Activated CD4-positive, alpha-beta T cell treated with anti-CD3 and anti-CD28 coated beads for 36 hours (primary cell): ENCODE measurements at regions of chr11 and their contacts with region 1.

Region 1: GRCh38 chr11:102451681-102452460 is 694 bp downstream of the TMEM123 start:
- DNase-seq: peak; percentile 90
- ATAC-seq: peak; percentile 66
- H3K4me3 Mint-ChIP-seq: peak overlapping the region; percentile 86
- H3K27ac Mint-ChIP-seq: peak overlapping the region; percentile 91
- H3K4me1 Mint-ChIP-seq: peaks cover 82% of the 10 kb centered on the region
- H3K27me3 Mint-ChIP-seq: no peaks in the 10 kb centered on the region

Region 2: GRCh38 chr11:102317099-102317767 is 134.6 kb before region 1 on chr11 and contains the start of gene BIRC3:
- CTCF ChIA-PET with region 1: interaction called, 3 read pairs
- POLR2A ChIA-PET with region 1: no interaction called
- intact Hi-C with region 1: loop called (anchors 1 to 2 kb)
- DNase-seq: peak; percentile 95
- ATAC-seq: peak; percentile 85
- H3K4me3 Mint-ChIP-seq: peak within 1 kb of the TSS; percentile 96
- H3K27ac Mint-ChIP-seq: peak within 1 kb of the TSS; percentile 99
- H3K4me1 Mint-ChIP-seq: peaks cover 68% of the 10 kb centered on the region
- H3K27me3 Mint-ChIP-seq: no peaks in the 10 kb centered on the region
- total RNA-seq, gene BIRC3: 99.2 to 109 TPM

Region 3: GRCh38 chr11:102330231-102330630 is 121.6 kb before region 1 on chr11:
- CTCF ChIA-PET with region 1: no interaction called
- POLR2A ChIA-PET with region 1: no interaction called
- intact Hi-C with region 1: no loop called
- DNase-seq: no peak
- ATAC-seq: no peak
- H3K4me3 Mint-ChIP-seq: no peak overlapping the region
- H3K27ac Mint-ChIP-seq: no peak overlapping the region
- H3K4me1 Mint-ChIP-seq: peaks cover 15% of the 10 kb centered on the region
- H3K27me3 Mint-ChIP-seq: no peaks in the 10 kb centered on the region

Region 4: DNA sequence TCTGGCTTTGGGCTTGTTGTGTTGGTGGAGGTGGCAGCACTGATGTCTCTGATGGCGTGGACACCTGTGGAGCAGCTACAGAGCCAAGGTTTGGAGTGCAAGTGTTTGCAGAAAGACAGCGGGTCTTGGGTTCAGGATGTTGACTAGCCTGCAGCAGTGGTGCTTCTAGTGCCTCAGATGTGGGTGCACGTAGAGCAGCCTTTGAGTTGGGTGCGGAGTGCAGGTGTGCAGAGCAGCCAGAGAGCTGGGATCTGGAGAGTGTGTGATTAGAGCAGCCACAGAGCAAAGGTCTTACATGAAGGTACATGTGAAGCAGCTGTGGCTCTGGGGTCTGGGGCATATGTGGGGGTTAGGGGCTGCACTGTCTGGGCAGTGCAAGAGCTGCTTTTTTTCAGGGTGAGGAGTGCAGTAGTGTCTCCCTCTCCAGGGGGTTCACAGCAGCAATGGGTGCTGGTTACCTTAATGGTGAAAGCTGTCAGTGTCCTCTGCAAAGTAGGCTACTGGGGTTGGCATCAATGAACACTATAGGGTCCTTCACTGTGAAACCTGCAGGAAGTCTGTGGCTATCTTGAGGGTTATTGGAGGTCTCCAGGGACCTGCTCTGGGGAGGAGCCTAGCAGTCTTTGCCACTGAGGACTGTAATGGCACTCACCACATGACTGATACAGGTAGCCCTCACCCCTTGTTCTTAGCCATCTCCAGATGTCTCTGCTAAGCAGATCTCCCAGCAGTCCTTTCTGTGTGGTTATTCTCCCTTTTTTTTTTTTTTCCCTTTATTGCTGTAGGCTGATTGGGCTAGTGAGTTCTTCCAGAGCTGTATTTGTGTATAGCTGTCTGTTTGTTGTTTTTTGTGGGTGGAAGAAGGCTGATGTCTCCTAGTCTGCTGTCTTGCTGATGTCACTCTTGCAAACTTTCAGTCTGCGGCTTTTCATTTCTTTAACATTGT is 90.5 kb before region 1 on chr11:
- CTCF ChIA-PET with region 1: no interaction called
- POLR2A ChIA-PET with region 1: no interaction called
- intact Hi-C with region 1: no loop called
- DNase-seq: peak; percentile 33
- ATAC-seq: peak; percentile 86
- H3K4me3 Mint-ChIP-seq: no peak overlapping the region
- H3K27ac Mint-ChIP-seq: peak overlapping the region; percentile 75
- H3K4me1 Mint-ChIP-seq: peaks cover 42% of the 10 kb centered on the region
- H3K27me3 Mint-ChIP-seq: no peaks in the 10 kb centered on the region

Region 5: DNA sequence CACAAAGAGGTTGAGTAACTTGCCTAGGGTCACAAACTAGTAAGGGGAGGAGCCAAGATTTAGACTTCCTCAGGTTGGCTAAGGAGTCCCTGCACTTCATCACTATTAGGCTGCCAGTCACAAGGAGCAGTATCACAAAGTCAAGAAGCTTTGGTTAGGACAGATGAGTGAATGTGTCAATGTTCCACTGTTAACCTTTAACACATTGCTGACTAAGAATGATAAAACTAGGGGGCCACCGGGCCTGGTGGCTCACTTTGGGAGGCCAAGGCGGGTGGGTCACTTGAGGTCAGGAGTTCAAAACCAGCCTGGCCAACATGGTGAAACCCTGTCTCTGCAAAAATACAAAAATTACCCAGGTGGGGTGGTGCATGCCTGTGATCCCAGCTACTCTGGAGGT is 31.3 kb before region 1 on chr11:
- CTCF ChIA-PET with region 1: interaction called, 7 read pairs
- POLR2A ChIA-PET with region 1: interaction called, 9 read pairs
- intact Hi-C with region 1: loop called (anchors 1 to 2 kb)
- DNase-seq: peak; percentile 59
- ATAC-seq: peak; percentile 73
- H3K4me3 Mint-ChIP-seq: no peak overlapping the region
- H3K27ac Mint-ChIP-seq: peak overlapping the region; percentile 53
- H3K4me1 Mint-ChIP-seq: peaks cover 95% of the 10 kb centered on the region
- H3K27me3 Mint-ChIP-seq: no peaks in the 10 kb centered on the region

Region 6: DNA sequence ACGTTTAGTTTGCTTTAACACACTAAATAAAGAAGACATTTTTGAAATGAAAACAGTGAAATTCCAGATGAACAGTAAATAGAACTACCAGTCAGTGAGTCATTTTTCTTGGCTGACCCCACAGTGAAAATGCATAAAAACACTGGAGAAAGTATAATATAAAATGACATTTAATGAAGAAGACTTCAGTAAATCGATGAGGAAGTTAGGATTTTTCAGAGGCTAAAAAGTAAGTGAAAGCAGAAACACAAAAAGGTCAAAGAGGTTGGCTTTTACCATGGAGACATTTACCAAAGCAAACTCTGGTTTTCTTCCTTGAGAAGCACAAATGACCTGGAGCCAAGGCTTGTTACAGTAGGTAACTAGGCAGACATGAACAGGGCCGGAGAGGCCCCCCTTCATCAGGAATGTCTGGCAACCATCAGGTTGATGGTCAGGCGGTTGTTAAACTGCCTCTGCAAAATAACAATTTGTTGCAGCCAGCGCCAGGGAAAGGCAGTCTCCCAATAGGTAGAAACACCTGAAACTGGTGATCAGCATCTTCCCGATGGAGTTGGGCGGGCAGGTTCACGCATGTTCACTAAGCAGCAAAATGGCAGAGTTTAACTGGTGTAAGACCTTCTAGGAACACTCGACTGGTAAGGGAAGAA is 17.4 kb after region 1 on chr11:
- CTCF ChIA-PET with region 1: interaction called, 3 read pairs
- POLR2A ChIA-PET with region 1: interaction called, 4 read pairs
- intact Hi-C with region 1: loop called in 1 of 2 experiments (anchors 2 kb)
- DNase-seq: no peak
- ATAC-seq: no peak
- H3K4me3 Mint-ChIP-seq: no peak overlapping the region
- H3K27ac Mint-ChIP-seq: peak overlapping the region; percentile 21
- H3K4me1 Mint-ChIP-seq: peaks cover 95% of the 10 kb centered on the region
- H3K27me3 Mint-ChIP-seq: no peaks in the 10 kb centered on the region

Region 7: GRCh38 chr11:102488208-102488607 is 36.3 kb after region 1 on chr11:
- CTCF ChIA-PET with region 1: interaction called, 3 read pairs
- POLR2A ChIA-PET with region 1: no interaction called
- intact Hi-C with region 1: loop called in 1 of 2 experiments (anchors 2 kb)
- DNase-seq: no peak
- ATAC-seq: peak; percentile 43
- H3K4me3 Mint-ChIP-seq: no peak overlapping the region
- H3K27ac Mint-ChIP-seq: peak overlapping the region; percentile 76
- H3K4me1 Mint-ChIP-seq: peaks cover 53% of the 10 kb centered on the region
- H3K27me3 Mint-ChIP-seq: no peaks in the 10 kb centered on the region

Region 8: DNA sequence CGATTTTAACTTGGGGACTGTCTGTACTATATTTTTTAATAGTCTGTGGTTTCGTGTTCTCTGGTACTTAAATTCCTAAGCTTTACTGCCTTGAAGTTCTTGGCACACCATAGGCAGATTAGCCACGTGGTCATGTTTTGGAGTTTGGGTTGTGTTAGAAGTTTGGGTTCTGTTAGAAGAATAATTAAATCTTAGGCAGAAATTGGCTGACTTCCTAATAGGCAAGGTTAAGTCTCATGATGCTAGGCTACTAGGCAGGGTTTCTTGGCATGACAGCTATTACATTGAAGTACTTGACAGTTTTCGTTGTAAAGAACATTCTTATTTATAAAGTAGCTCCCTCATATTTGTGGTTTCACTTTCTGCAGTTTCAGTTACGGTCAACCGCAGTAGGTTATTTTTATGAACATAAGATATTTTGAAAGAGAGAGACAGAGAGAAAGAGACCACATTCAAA is 108.7 kb after region 1 on chr11:
- CTCF ChIA-PET with region 1: no interaction called
- POLR2A ChIA-PET with region 1: no interaction called
- intact Hi-C with region 1: loop called in 1 of 2 experiments (anchors 5 kb)
- DNase-seq: no peak
- ATAC-seq: peak; percentile 55
- H3K4me3 Mint-ChIP-seq: peak overlapping the region; percentile 38
- H3K27ac Mint-ChIP-seq: peak overlapping the region; percentile 24
- H3K4me1 Mint-ChIP-seq: peaks cover 40% of the 10 kb centered on the region
- H3K27me3 Mint-ChIP-seq: peaks cover 2% of the 10 kb centered on the region

Region 9: GRCh38 chr11:103043826-103044624 is 592.2 kb after region 1 on chr11:
- CTCF ChIA-PET with region 1: no interaction called
- POLR2A ChIA-PET with region 1: no interaction called
- intact Hi-C with region 1: no loop called
- DNase-seq: no peak
- ATAC-seq: no peak
- H3K4me3 Mint-ChIP-seq: no peak overlapping the region
- H3K27ac Mint-ChIP-seq: no peak overlapping the region
- H3K4me1 Mint-ChIP-seq: no peaks in the 10 kb centered on the region
- H3K27me3 Mint-ChIP-seq: peaks cover 7% of the 10 kb centered on the region